IMR-90 (cell line): ENCODE measurements at regions of chr9 and their contacts with region 1.

Region 1: GRCh38 chr9:70318002-70318401 is 59.2 kb downstream of the SMC5 start:
- DNase-seq: no peak
- ATAC-seq: no peak
- H3K4me3 ChIP-seq: no peak overlapping the region
- H3K27ac ChIP-seq: no peak overlapping the region
- H3K4me1 ChIP-seq: no peaks in the 10 kb centered on the region
- H3K27me3 ChIP-seq: no peaks in the 10 kb centered on the region
- CTCF ChIP-seq: no peak
- POLR2A ChIP-seq: no peak
- RAD21 ChIP-seq: no peak

Region 2: DNA sequence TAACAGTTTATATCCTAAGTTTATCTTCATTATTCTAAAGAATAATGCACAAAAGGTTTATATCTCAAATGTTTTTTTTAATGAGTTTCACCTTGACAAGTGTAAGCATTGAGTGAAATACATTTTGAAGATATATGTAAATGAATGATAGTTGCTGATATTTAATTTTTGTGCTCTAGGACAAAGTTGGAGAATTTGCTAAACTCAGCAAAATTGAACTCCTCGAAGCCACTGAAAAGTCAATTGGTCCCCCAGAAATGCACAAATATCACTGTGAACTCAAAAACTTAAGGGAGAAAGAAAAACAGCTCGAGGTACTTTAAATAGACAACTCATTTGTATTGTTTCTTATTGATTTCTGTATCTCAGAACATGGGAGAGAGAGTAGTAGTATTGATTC is 39.7 kb before region 1 on chr9:
- CTCF ChIA-PET with region 1: no interaction called
- POLR2A ChIA-PET with region 1: no interaction called
- dilution Hi-C with region 1: no loop called
- in situ Hi-C with region 1: no loop called
- intact Hi-C with region 1: loop called (anchors 5 kb)
- DNase-seq: no peak
- ATAC-seq: no peak
- H3K4me3 ChIP-seq: no peak overlapping the region
- H3K27ac ChIP-seq: no peak overlapping the region
- H3K4me1 ChIP-seq: peaks cover 3% of the 10 kb centered on the region; the same call in 1 of the 2 replicates
- H3K27me3 ChIP-seq: no peaks in the 10 kb centered on the region
- CTCF ChIP-seq: no peak
- POLR2A ChIP-seq: no peak
- RAD21 ChIP-seq: no peak